OCI-LY7 (cell line): ENCODE measurements at regions of chr3 and their contacts with region 1.

Region 1: DNA sequence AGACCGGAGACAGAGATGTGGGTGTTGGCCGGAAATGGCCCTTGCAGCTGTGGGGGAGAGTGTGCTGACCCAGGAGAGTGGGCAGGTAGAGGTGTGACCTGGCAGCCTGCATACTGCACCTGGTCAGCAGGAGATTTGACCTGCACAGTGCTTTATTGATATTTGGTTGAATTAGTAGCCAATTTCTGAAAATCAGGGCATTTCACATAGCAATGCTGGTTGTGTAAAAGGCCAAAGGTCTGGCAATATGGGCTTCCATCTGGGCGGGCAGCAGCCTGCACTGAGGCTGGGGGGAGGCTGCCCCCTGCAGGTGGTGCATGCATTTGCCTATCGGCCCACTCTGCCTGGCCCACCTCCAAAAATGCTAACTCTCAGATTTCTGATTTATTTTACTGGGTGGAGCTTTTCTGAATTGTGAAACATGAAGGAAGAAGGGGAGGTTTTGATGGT is 9.4 kb upstream of the MGLL start:
- DNase-seq: peak; percentile 65
- H3K4me3 ChIP-seq: no peak overlapping the region
- H3K27ac ChIP-seq: no peak overlapping the region
- H3K4me1 ChIP-seq: no peaks in the 10 kb centered on the region
- CTCF ChIP-seq: peak; percentile 92

Region 2: DNA sequence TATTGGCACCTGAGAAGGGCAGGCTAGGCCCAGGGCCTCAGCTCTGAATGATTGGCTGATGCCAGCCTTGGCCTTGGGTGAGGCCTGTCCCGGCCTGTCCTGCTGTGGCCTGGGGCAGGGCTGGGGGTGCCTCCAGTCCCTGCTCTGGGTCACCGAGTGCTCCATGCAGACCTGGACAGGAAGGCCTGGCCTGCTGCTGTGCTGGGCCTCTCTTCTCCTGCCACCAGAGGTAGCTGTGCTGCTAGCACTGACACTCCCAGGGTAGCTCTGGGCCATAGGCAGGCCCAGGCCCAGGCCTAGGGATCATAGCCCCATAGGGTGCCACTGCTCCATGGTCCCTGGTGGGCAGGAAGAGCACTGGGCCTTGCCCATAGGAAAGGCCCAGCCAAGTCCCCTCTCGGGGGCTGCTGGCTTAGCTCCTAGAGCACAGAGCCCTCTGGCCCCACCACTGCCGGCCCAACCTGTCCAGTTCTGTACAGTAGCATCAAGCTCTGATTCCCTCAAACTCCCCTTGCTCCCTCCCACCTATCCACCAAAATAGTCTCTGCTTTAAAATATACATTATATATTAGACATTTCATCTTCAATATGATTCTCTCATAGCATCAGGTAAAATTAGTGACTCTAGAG is 140.8 kb before region 1 on chr3:
- CTCF ChIA-PET with region 1: no interaction called
- POLR2A ChIA-PET with region 1: no interaction called
- intact Hi-C with region 1: loop called (anchors 2 kb)
- DNase-seq: no peak
- H3K4me3 ChIP-seq: no peak overlapping the region
- H3K27ac ChIP-seq: no peak overlapping the region
- H3K4me1 ChIP-seq: no peaks in the 10 kb centered on the region
- CTCF ChIP-seq: peak; percentile 46; the same call in 1 of the 2 replicates

Region 3: GRCh38 chr3:127820221-127820825 is 11.4 kb before region 1 on chr3:
- CTCF ChIA-PET with region 1: no interaction called
- POLR2A ChIA-PET with region 1: no interaction called
- intact Hi-C with region 1: no loop called
- DNase-seq: no peak
- H3K4me3 ChIP-seq: no peak overlapping the region
- H3K27ac ChIP-seq: no peak overlapping the region
- H3K4me1 ChIP-seq: no peaks in the 10 kb centered on the region
- CTCF ChIP-seq: no peak